Naive thymus-derived CD4-positive, alpha-beta T cell (primary cell): ENCODE measurements at regions of chr13 and their contacts with region 1.

Region 1: GRCh38 chr13:49690992-49691886 is at the start of gene EBPL:
- DNase-seq: peak; percentile 57 to 91 (median 73)
- ATAC-seq: peak; percentile 97
- H3K4me3 ChIP-seq: peak within 1 kb of the TSS; percentile 67
- H3K4me3 Mint-ChIP-seq: peak within 1 kb of the TSS; percentile 88 to 96 (median 92)
- H3K27ac ChIP-seq: peak within 1 kb of the TSS; percentile 56
- H3K27ac Mint-ChIP-seq: peak within 1 kb of the TSS; percentile 73 to 91 (median 81)
- H3K4me1 ChIP-seq: peaks cover 0 to 17% of the 10 kb centered on the region in 2 donors
- H3K4me1 Mint-ChIP-seq: peaks cover 21 to 58% (median 45%) of the 10 kb centered on the region in 7 donors
- H3K27me3 ChIP-seq: no peaks in the 10 kb centered on the region
- H3K27me3 Mint-ChIP-seq: no peaks in the 10 kb centered on the region
- total RNA-seq, gene EBPL: 13.3 to 34.9 (median 20.4) TPM

Region 2: DNA sequence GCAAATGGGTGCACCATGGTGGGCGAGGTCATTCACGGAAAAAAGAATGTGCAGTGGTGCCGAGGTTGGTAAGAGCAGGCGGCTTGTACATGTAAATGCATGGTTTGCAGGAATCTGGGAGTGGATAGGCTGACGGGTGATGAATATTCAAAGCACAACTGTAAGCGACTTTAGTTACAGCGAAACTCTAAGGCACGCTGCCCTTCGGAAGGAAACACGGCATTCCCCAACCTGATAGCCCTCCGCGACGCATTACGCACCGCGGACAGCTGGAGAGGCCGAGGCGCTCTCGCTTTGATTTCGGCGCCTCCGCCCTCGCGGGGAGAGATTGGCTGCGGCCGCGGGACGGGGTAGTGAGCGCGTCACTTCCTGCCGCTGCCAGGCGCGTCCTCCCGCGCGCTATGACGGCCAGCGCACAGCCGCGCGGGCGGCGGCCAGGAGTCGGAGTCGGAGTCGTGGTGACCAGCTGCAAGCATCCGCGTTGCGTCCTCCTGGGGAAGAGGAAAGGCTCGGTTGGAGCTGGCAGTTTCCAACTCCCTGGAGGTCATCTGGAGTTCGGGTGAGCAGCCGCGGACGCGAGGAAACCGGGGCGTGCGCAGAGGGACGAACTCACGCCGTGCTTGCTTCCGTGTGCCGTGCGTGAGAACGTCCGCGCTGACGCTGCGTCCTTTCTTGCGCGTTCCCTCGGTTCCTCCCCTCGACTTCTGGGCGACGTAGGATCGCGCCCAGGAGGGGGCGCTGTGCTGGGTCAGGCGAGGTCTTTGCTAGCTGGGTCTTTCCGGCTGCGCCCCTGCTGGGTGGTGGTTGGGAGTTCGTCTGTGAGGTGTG is 1653.7 kb before region 1 on chr13 and contains the start of gene NUDT15:
- CTCF ChIA-PET with region 1: no interaction called
- POLR2A ChIA-PET with region 1: no interaction called
- intact Hi-C with region 1: loop called in 1 of 2 experiments (anchors 5 kb)
- DNase-seq: peak; percentile 93 to 98 (median 97)
- ATAC-seq: peak; percentile 96
- H3K4me3 ChIP-seq: peak within 1 kb of the TSS; percentile 90
- H3K4me3 Mint-ChIP-seq: peak within 1 kb of the TSS; percentile 82 to 98 (median 95)
- H3K27ac ChIP-seq: peak within 1 kb of the TSS; percentile 91
- H3K27ac Mint-ChIP-seq: peak within 1 kb of the TSS; percentile 96 to 100 (median 97)
- H3K4me1 ChIP-seq: peaks cover 14 to 15% of the 10 kb centered on the region in 2 donors
- H3K4me1 Mint-ChIP-seq: peaks cover 15 to 52% (median 40%) of the 10 kb centered on the region in 7 donors
- H3K27me3 ChIP-seq: no peaks in the 10 kb centered on the region
- H3K27me3 Mint-ChIP-seq: no peaks in the 10 kb centered on the region
- total RNA-seq, gene NUDT15: 4.3 to 13.6 (median 8.7) TPM

Region 3: DNA sequence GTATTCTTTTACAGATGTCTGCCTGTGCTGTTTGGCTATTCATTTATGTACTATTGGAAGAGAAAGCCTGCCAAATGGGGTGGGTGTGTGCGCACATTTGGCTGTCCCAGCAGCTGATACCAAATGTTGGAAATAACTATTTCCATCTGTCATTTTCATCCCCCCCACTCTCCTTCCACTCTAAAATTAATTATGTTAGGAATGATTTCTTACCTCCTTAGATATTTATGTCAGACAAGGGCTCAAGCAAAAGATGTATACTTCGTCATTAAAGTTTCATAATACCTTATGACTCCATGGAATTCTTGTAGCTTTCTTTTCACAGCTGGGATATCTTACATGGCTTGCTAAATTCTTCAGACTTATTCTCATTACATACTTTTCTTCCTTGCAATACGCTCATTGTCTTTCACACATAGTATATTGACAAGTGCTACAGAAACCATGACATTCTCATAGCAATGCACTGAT is 1439.6 kb before region 1 on chr13:
- CTCF ChIA-PET with region 1: no interaction called
- POLR2A ChIA-PET with region 1: no interaction called
- intact Hi-C with region 1: no loop called
- DNase-seq: no peak
- ATAC-seq: no peak
- H3K4me3 ChIP-seq: no peak overlapping the region
- H3K4me3 Mint-ChIP-seq: peak overlapping the region in 5 of 10 donors; percentile 12 to 41 (median 38)
- H3K27ac ChIP-seq: no peak overlapping the region
- H3K27ac Mint-ChIP-seq: peak overlapping the region in 6 of 9 donors; percentile 38 to 81 (median 57)
- H3K4me1 ChIP-seq: peaks cover 2 to 49% of the 10 kb centered on the region in 2 donors
- H3K4me1 Mint-ChIP-seq: peaks cover 7 to 89% (median 74%) of the 10 kb centered on the region in 7 donors
- H3K27me3 ChIP-seq: no peaks in the 10 kb centered on the region
- H3K27me3 Mint-ChIP-seq: no peaks in the 10 kb centered on the region

Region 4: DNA sequence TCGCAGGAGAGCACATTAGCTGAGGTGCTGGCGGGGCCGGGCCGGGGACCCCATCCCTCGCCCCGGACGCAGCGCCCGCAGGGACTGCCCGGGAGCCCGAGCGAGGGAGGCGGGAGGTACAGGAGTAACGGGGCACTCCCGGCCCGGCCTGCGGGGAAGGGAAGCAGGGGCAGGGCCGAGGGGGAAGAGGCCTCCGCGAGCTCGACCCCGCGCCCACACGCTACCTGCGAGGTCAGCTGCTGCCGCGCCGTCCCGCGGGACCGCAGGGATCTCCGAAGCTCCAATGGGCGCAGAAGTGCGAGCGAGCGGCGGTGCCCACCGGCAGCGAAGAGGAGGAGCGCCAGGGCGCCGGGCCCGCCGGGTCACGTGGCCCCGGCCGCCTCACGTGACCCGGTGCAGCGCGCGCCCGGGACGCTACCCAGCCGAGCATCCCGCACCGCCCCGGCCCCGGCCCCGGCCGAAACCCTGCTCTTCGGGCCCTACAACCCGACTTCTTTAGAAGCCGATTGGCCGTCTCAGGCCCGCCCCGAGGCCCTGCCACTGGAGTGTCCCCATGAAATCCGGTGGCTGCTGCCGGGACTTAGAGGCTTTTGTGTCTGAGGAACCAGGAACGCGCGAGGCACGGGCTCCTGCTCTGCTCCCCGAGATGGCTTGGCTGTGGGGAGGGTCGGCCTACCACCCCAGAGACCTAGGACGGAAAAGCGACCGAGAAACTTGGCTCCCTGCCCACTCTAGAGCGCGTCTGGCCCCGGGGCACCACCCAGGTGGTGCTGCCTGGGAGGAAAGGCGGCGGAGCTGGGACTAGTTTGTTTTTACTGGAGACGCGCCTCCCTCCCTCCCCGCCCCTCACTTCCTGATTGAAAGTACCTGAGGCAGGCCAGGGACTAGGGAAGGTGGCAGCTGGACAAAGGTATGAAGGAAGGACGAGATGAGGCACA is 105.8 kb before region 1 on chr13 and contains the start of gene RCBTB1:
- CTCF ChIA-PET with region 1: no interaction called
- POLR2A ChIA-PET with region 1: interaction called, 3 read pairs
- intact Hi-C with region 1: loop called in 1 of 2 experiments (anchors 1 kb)
- DNase-seq: peak; percentile 47 to 74 (median 66)
- ATAC-seq: peak; percentile 97
- H3K4me3 ChIP-seq: peak within 1 kb of the TSS; percentile 56
- H3K4me3 Mint-ChIP-seq: peak within 1 kb of the TSS; percentile 83 to 100 (median 92)
- H3K27ac ChIP-seq: peak within 1 kb of the TSS; percentile 82
- H3K27ac Mint-ChIP-seq: peak within 1 kb of the TSS; percentile 86 to 96 (median 94)
- H3K4me1 ChIP-seq: peaks cover 10 to 16% of the 10 kb centered on the region in 2 donors
- H3K4me1 Mint-ChIP-seq: peaks cover 32 to 53% (median 50%) of the 10 kb centered on the region in 7 donors
- H3K27me3 ChIP-seq: no peaks in the 10 kb centered on the region
- H3K27me3 Mint-ChIP-seq: peaks cover 0 to 3% (median 0%) of the 10 kb centered on the region in 5 donors
- total RNA-seq, gene RCBTB1: 16.3 to 22.2 (median 20.4) TPM

Region 5: GRCh38 chr13:49597043-49597641 is 94.1 kb before region 1 on chr13:
- CTCF ChIA-PET with region 1: no interaction called
- POLR2A ChIA-PET with region 1: no interaction called
- intact Hi-C with region 1: no loop called
- DNase-seq: no peak
- ATAC-seq: peak; percentile 42
- H3K4me3 ChIP-seq: no peak overlapping the region
- H3K4me3 Mint-ChIP-seq: no peak overlapping the region
- H3K27ac ChIP-seq: no peak overlapping the region
- H3K27ac Mint-ChIP-seq: no peak overlapping the region
- H3K4me1 ChIP-seq: no peaks in the 10 kb centered on the region
- H3K4me1 Mint-ChIP-seq: peaks cover 0 to 2% (median 0%) of the 10 kb centered on the region in 7 donors
- H3K27me3 ChIP-seq: no peaks in the 10 kb centered on the region
- H3K27me3 Mint-ChIP-seq: peaks cover 0 to 4% (median 0%) of the 10 kb centered on the region in 5 donors

Region 6: GRCh38 chr13:49669735-49670309 is 21.4 kb before region 1 on chr13:
- CTCF ChIA-PET with region 1: interaction called, 5 read pairs
- POLR2A ChIA-PET with region 1: no interaction called
- intact Hi-C with region 1: loop called in 1 of 2 experiments (anchors 2 kb)
- DNase-seq: peak in 2 of 9 donors; percentile 21 to 37
- ATAC-seq: peak; percentile 76
- H3K4me3 ChIP-seq: no peak overlapping the region
- H3K4me3 Mint-ChIP-seq: no peak overlapping the region
- H3K27ac ChIP-seq: no peak overlapping the region
- H3K27ac Mint-ChIP-seq: no peak overlapping the region
- H3K4me1 ChIP-seq: no peaks in the 10 kb centered on the region
- H3K4me1 Mint-ChIP-seq: peaks cover 0 to 10% (median 3%) of the 10 kb centered on the region in 7 donors
- H3K27me3 ChIP-seq: no peaks in the 10 kb centered on the region
- H3K27me3 Mint-ChIP-seq: no peaks in the 10 kb centered on the region